ENCODE measurements at regions of chr2 and their contacts with region 1.

Region 1: DNA sequence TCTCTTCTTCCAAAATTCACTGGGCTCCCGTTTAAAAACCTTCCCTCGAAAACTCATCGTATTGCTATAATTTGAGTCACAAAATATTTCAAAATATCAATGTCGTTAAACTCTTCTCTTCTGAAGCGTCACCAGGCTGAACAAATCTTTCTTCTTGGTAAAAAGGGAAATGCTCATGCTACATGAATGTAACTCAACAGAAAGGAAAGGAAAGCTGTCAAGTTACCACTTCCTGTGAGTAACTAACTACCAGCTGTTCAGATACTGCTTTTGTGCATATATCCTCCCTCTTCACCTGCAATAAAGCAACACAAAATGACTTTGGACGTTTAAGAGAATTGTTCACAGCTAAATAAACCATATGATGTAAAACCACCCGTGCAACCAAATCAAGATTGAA is 95.4 kb downstream of the DOCK10 start:
- DNase-seq: peak; percentile 79
- H3K4me3 Mint-ChIP-seq: peak overlapping the region; percentile 82
- H3K27ac Mint-ChIP-seq: peak overlapping the region; percentile 84
- H3K4me1 Mint-ChIP-seq: peaks cover 60% of the 10 kb centered on the region
- H3K27me3 Mint-ChIP-seq: no peaks in the 10 kb centered on the region

Region 2: DNA sequence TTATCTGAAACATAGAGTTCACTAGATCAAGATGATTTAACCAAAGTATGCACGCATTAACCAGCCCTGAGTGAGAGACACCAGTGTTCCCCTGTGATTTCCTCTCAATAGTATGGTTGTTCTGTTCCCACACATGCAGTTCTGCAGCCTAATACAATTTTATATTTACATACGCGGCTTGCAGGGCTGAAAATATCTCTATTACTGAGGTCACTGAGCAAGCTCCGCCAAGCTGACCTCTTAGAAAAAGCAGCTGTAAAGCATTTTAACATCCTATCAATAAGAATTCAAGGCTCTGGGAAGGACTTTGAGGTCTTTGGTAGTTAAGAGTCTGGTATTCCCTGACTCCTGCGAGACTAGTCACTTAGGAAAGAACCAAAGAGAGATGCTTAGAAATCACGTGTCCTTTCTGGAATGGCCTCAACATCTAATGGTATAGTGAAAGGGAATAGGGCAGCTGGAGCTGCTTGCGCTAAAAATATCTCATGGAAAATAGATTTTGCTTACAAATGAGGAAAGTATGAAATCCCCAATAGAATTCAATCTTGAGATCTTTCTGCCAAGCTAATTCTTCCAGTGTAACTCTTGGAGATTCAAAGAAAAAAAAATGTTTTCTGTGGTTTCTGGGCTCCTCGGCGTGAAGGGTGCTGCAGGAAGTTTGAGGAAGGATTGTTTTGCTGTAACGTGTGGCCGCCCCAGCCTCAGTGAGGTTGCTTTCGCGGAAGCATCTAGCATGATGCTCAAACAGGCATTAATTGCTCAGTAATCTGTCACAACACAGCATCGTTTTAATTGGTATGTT is 36.2 kb after region 1 on chr2:
- intact Hi-C with region 1: loop called (anchors 2 kb)
- DNase-seq: peak; percentile 86
- H3K4me3 Mint-ChIP-seq: peak overlapping the region; percentile 67
- H3K27ac Mint-ChIP-seq: peak overlapping the region; percentile 85
- H3K4me1 Mint-ChIP-seq: peaks cover 70% of the 10 kb centered on the region
- H3K27me3 Mint-ChIP-seq: no peaks in the 10 kb centered on the region